MCF 10A (cell line): ENCODE measurements at regions of chr13 and their contacts with region 1.

Region 1: GRCh38 chr13:75219479-75220237 is 262.3 kb downstream of the TBC1D4 start:
- DNase-seq: peak; percentile 74
- H3K4me3 Mint-ChIP-seq: peak overlapping the region; percentile 54
- H3K27ac Mint-ChIP-seq: no peak overlapping the region
- H3K4me1 Mint-ChIP-seq: peaks cover 29% of the 10 kb centered on the region
- H3K27me3 Mint-ChIP-seq: no peaks in the 10 kb centered on the region
- CTCF ChIP-seq: peak; percentile 97

Region 2: DNA sequence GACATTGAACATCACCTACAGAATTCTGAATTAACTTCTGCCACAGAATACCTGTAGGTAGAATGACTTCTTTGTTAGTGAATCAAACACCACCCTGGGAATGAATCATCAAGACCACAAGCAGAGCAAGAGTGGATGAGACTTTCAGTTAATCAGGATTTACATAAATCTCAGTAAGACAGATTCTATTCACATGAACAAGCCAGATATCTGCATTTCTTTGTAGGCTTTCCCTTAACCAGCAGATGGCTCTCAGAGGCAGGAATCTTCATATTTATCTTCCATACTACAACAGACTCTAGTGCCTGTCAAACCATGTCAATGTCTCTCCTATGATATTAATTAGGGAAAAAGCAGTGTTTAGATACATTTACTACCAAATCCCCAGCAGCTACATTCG is 1497.5 kb before region 1 on chr13:
- CTCF ChIA-PET with region 1: interaction called, 9 read pairs
- POLR2A ChIA-PET with region 1: interaction called, 6 read pairs
- intact Hi-C with region 1: loop called (anchors 1 kb)
- DNase-seq: peak; percentile 64
- H3K4me3 Mint-ChIP-seq: no peak overlapping the region
- H3K27ac Mint-ChIP-seq: no peak overlapping the region
- H3K4me1 Mint-ChIP-seq: peaks cover 14% of the 10 kb centered on the region
- H3K27me3 Mint-ChIP-seq: no peaks in the 10 kb centered on the region
- CTCF ChIP-seq: peak; percentile 37

Region 3: GRCh38 chr13:73835138-73835721 is 1384.4 kb before region 1 on chr13:
- CTCF ChIA-PET with region 1: interaction called, 19 read pairs
- POLR2A ChIA-PET with region 1: no interaction called
- intact Hi-C with region 1: loop called (anchors 1 kb)
- DNase-seq: peak; percentile 61
- H3K4me3 Mint-ChIP-seq: no peak overlapping the region
- H3K27ac Mint-ChIP-seq: no peak overlapping the region
- H3K4me1 Mint-ChIP-seq: peaks cover 5% of the 10 kb centered on the region
- H3K27me3 Mint-ChIP-seq: no peaks in the 10 kb centered on the region
- CTCF ChIP-seq: peak; percentile 58

Region 4: GRCh38 chr13:74443631-74444030 is 776.0 kb before region 1 on chr13:
- CTCF ChIA-PET with region 1: interaction called, 5 read pairs
- POLR2A ChIA-PET with region 1: no interaction called
- intact Hi-C with region 1: loop called (anchors 10 kb)
- DNase-seq: peak; percentile 78
- H3K4me3 Mint-ChIP-seq: peak overlapping the region; percentile 59
- H3K27ac Mint-ChIP-seq: peak overlapping the region; percentile 43
- H3K4me1 Mint-ChIP-seq: peaks cover 20% of the 10 kb centered on the region
- H3K27me3 Mint-ChIP-seq: no peaks in the 10 kb centered on the region
- CTCF ChIP-seq: no peak

Region 5: DNA sequence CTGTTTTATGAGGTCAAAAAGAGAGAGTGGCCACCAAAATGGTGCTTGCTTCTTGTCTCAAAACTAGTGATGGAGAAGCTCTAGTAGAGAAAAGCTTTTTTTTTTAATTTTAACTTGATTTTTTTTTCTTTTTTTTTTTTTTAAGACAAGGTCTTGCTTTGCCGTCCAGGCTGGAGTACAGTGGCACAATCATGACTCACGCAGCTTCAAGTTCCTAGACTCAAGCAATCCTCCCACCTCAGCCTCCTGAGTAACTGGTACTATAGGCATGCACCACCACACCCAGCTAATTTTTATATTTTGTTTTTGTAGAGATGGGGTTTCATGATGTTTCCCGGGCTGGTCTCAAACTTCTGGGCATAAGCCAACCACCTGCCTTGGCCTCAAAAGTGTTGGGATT is 16.7 kb before region 1 on chr13:
- CTCF ChIA-PET with region 1: interaction called, 17 read pairs
- POLR2A ChIA-PET with region 1: no interaction called
- intact Hi-C with region 1: no loop called
- DNase-seq: no peak
- H3K4me3 Mint-ChIP-seq: no peak overlapping the region
- H3K27ac Mint-ChIP-seq: no peak overlapping the region
- H3K4me1 Mint-ChIP-seq: no peaks in the 10 kb centered on the region
- H3K27me3 Mint-ChIP-seq: no peaks in the 10 kb centered on the region
- CTCF ChIP-seq: no peak

Region 6: GRCh38 chr13:75318138-75318833 is 98.6 kb after region 1 on chr13:
- CTCF ChIA-PET with region 1: no interaction called
- POLR2A ChIA-PET with region 1: no interaction called
- intact Hi-C with region 1: no loop called
- DNase-seq: no peak
- H3K4me3 Mint-ChIP-seq: no peak overlapping the region
- H3K27ac Mint-ChIP-seq: no peak overlapping the region
- H3K4me1 Mint-ChIP-seq: no peaks in the 10 kb centered on the region
- H3K27me3 Mint-ChIP-seq: no peaks in the 10 kb centered on the region
- CTCF ChIP-seq: no peak